ENCODE measurements at regions of chr1 and their contacts with region 1.

Region 1: GRCh38 chr1:109643385-109644230 is 12.3 kb upstream of the GSTM4 start:
- DNase-seq: peak; percentile 92
- H3K4me3 Mint-ChIP-seq: no peak overlapping the region
- H3K27ac Mint-ChIP-seq: peak overlapping the region; percentile 5
- H3K4me1 Mint-ChIP-seq: peaks cover 13% of the 10 kb centered on the region
- H3K27me3 Mint-ChIP-seq: peaks cover 37% of the 10 kb centered on the region

Region 2: GRCh38 chr1:109559995-109560394 is 83.6 kb before region 1 on chr1:
- CTCF ChIA-PET with region 1: interaction called, 10 read pairs
- DNase-seq: no peak
- H3K4me3 Mint-ChIP-seq: no peak overlapping the region
- H3K27ac Mint-ChIP-seq: no peak overlapping the region
- H3K4me1 Mint-ChIP-seq: peaks cover 31% of the 10 kb centered on the region
- H3K27me3 Mint-ChIP-seq: no peaks in the 10 kb centered on the region

Region 3: GRCh38 chr1:109630081-109630897 is 13.3 kb before region 1 on chr1:
- CTCF ChIA-PET with region 1: interaction called, 40 read pairs
- DNase-seq: peak; percentile 52
- H3K4me3 Mint-ChIP-seq: no peak overlapping the region
- H3K27ac Mint-ChIP-seq: no peak overlapping the region
- H3K4me1 Mint-ChIP-seq: peaks cover 22% of the 10 kb centered on the region
- H3K27me3 Mint-ChIP-seq: no peaks in the 10 kb centered on the region

Region 4: DNA sequence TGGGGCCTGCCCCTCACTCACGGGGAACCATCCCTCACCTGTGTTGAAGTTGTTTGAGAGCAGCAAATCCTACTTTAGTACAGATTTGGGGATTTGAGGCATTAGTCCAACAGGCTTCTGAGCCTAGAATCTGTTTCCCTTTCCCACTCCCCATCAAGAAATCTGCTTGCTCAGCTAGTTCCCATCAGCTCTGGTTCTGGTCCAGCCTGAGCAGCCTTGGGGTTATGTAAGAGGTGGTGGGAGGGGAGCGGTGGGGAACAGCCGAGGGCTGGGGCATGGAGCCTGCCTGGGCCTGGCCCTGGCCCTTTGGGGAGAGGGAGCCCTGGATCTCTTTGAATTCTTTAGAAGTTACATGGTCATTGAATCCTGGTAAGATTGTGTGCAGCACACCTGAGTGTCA is 72.5 kb after region 1 on chr1:
- CTCF ChIA-PET with region 1: interaction called, 10 read pairs
- DNase-seq: no peak
- H3K4me3 Mint-ChIP-seq: no peak overlapping the region
- H3K27ac Mint-ChIP-seq: no peak overlapping the region
- H3K4me1 Mint-ChIP-seq: no peaks in the 10 kb centered on the region
- H3K27me3 Mint-ChIP-seq: peaks cover 52% of the 10 kb centered on the region

Region 5: GRCh38 chr1:109773146-109773899 is 129.7 kb after region 1 on chr1:
- CTCF ChIA-PET with region 1: interaction called, 326 read pairs
- DNase-seq: peak; percentile 82
- H3K4me3 Mint-ChIP-seq: no peak overlapping the region
- H3K27ac Mint-ChIP-seq: no peak overlapping the region
- H3K4me1 Mint-ChIP-seq: peaks cover 11% of the 10 kb centered on the region
- H3K27me3 Mint-ChIP-seq: peaks cover 52% of the 10 kb centered on the region